ENCODE measurements at regions of chr1 and their contacts with region 1.

Region 1: DNA sequence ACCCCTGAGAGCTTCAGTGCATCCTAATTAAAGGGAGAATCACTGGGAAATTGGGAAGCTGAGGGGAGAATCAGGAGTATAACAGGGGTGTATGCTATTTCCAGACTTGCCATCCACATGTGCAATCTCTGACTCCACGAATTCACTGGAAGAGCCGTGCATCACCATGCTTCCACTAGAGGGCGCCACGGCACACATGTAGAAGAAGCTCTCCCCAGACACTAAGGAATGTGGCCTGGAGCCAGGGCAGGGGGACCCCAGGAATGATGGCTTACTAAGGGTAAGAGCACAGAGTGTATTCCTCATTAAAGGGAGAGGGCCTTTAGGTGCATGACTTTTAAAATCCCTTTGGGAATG is 81.5 kb downstream of the ABCA4 start:
- DNase-seq: no peak
- ATAC-seq: no peak
- H3K4me3 Mint-ChIP-seq: no peak overlapping the region
- H3K27ac Mint-ChIP-seq: no peak overlapping the region
- H3K4me1 Mint-ChIP-seq: peaks cover 4% of the 10 kb centered on the region
- H3K27me3 Mint-ChIP-seq: peaks cover 32% of the 10 kb centered on the region
- CTCF ChIP-seq: no peak

Region 2: GRCh38 chr1:93964777-93965200 is 74.7 kb before region 1 on chr1:
- CTCF ChIA-PET with region 1: no interaction called
- POLR2A ChIA-PET with region 1: no interaction called
- intact Hi-C with region 1: no loop called
- DNase-seq: no peak
- ATAC-seq: no peak
- H3K4me3 Mint-ChIP-seq: no peak overlapping the region
- H3K27ac Mint-ChIP-seq: no peak overlapping the region
- H3K4me1 Mint-ChIP-seq: no peaks in the 10 kb centered on the region
- H3K27me3 Mint-ChIP-seq: peaks cover 9% of the 10 kb centered on the region
- CTCF ChIP-seq: no peak

Region 3: GRCh38 chr1:94160811-94161210 is 121.3 kb after region 1 on chr1:
- CTCF ChIA-PET with region 1: no interaction called
- POLR2A ChIA-PET with region 1: no interaction called
- intact Hi-C with region 1: no loop called
- DNase-seq: no peak
- ATAC-seq: no peak
- H3K4me3 Mint-ChIP-seq: no peak overlapping the region
- H3K27ac Mint-ChIP-seq: no peak overlapping the region
- H3K4me1 Mint-ChIP-seq: no peaks in the 10 kb centered on the region
- H3K27me3 Mint-ChIP-seq: peaks cover 8% of the 10 kb centered on the region
- CTCF ChIP-seq: no peak

Region 4: DNA sequence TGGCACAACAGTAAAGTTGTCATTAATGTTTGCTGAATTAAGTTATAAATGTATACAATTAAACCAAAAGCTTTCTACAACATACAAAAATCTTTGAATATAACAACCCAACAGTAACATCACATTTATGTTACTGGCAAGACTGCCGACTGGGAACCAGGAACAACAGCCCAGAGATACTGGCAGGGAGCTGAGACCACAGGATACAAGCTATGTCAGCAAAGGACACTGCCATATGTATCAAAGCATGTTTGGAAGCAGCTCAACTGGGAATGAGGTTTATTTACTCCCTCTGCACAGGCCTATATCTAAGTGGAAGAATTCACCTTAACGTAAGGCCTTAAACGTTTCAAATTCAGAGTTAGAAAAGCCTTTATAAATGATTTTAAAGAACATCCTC is 147.5 kb after region 1 on chr1:
- CTCF ChIA-PET with region 1: no interaction called
- POLR2A ChIA-PET with region 1: interaction called, 11 read pairs
- intact Hi-C with region 1: no loop called
- DNase-seq: no peak
- ATAC-seq: no peak
- H3K4me3 Mint-ChIP-seq: no peak overlapping the region
- H3K27ac Mint-ChIP-seq: no peak overlapping the region
- H3K4me1 Mint-ChIP-seq: no peaks in the 10 kb centered on the region
- H3K27me3 Mint-ChIP-seq: peaks cover 7% of the 10 kb centered on the region
- CTCF ChIP-seq: no peak